ENCODE measurements at regions of chr2 and their contacts with region 1.

Region 1: DNA sequence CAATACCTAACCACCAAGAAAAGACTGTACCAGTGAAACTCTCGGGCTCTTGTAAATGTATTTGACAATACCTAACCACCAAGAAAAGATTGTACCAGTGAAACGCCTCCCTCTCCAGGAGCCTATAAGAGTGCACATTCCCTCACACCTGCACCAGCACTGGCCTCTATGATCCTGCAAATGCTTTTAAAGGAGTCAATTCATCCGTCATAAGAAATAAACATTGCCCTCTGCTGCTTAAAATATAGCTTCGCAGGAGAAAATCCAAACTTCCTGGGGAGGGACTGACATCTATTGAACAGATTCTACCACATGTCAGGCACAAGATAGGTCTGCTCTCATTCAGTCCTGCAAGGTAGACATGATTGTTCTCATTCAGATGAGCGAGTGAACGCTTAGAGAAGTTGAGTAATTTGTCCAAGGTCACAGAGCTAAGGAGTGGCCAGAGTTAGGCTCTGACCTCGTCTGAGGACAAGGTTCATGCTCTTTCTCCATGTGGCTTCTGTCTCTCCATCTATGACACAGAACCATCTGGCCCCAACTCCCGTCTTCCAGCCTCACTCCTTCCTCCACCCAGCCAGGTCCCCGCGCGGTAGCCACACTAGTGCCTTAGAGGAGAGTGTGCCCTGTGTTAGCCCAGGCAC is 38.7 kb downstream of the MCFD2 start:
- DNase-seq: no peak
- H3K4me3 ChIP-seq: no peak overlapping the region
- H3K27ac ChIP-seq: no peak overlapping the region
- H3K4me1 ChIP-seq: peaks cover 0 to 10% of the 10 kb centered on the region in 2 donors
- H3K27me3 ChIP-seq: no peaks in the 10 kb centered on the region
- CTCF ChIP-seq: peak; percentile 47 to 67 (median 66)

Region 2: GRCh38 chr2:46803911-46804670 is 72.8 kb before region 1 on chr2:
- intact Hi-C with region 1: loop called (anchors 5 kb)
- DNase-seq: no peak
- H3K4me3 ChIP-seq: no peak overlapping the region
- H3K27ac ChIP-seq: peak overlapping the region; percentile 8 to 69
- H3K4me1 ChIP-seq: peaks cover 0 to 7% of the 10 kb centered on the region in 2 donors
- H3K27me3 ChIP-seq: no peaks in the 10 kb centered on the region
- CTCF ChIP-seq: no peak